GM12878 (cell line): ENCODE measurements at regions of chr3 and their contacts with region 1.

Region 1: DNA sequence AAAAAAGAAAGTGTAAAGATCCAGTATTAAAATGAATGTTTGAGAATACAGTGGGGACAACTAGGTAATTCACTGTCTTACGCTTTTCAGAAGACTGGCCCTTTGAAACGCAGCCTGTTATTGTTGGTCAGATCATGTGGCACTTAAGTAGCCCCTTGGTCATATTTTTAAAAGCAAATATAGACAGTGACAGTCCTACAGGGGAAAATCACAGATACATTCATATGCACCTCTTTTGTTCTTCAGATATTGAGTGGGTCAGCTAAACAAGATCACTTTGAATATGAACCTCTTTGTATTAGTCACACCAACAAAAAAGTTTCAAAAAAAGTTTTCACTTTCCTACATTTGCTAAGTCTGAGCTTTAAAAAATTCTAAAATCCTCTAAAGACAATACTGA is 36.0 kb downstream of the TIGIT start:
- DNase-seq: no peak
- ATAC-seq: peak; percentile 57
- H3K4me3 ChIP-seq: no peak overlapping the region
- H3K27ac ChIP-seq: no peak overlapping the region
- H3K4me1 ChIP-seq: peaks cover 18% of the 10 kb centered on the region; the same call in 1 of the 2 replicates
- H3K27me3 ChIP-seq: no peaks in the 10 kb centered on the region
- CTCF ChIP-seq: no peak
- EP300 ChIP-seq: peak in 1 of 2 experiments; percentile 18; a peak in 1 of 4 replicates
- POLR2A ChIP-seq: no peak
- RAD21 ChIP-seq: no peak

Region 2: DNA sequence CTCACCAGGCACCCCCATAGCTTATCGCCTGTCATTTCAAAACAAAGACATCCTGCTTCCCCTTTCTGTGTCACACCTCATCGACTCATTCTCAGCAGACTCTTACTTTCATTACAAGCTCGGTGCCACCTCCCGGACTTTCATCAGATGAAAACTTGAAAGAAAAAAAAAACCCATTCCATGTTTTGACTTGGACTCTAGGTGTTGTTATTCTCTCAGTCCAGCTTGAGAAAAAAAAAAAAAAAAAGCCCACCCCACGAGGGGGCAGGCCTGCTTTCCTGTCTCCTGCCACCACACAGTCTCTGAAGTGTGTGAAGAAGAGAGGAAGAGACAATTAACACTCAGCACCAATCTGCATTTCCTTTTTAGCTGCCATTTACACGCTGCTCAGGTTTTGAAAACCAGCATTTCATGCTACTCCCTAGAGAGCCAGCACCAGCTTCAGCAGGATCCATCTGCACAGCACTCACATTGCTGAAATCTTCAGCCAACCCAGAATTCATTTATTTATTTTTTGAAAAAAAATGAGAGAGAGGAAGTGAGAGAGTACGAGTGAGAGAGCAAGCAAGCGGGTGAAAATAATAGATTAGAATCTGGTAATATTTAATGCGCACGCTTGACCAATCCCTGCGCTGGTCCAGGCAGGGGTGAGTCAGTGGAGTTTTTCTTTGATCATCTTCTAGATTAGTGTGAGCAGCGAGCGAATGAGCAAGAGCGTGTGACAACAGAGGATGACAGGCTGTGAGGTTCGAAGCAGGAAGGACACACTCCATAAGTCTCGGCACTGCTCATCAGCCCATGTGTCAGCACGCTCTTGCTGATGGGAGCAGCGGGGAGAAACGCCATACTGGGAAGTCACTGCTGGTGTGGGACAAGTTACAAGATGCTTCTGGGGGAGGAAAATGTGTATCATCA is 115.9 kb before region 1 on chr3:
- CTCF ChIA-PET with region 1: no interaction called
- POLR2A ChIA-PET with region 1: interaction called, 14 read pairs
- RAD21 ChIA-PET with region 1: interaction called, 29 read pairs
- SMC1A ChIA-PET with region 1: interaction called, 3 read pairs
- in situ Hi-C with region 1: no loop called
- intact Hi-C with region 1: no loop called
- DNase-seq: peak; percentile 84
- ATAC-seq: peak; percentile 91
- H3K4me3 ChIP-seq: peak overlapping the region; percentile 63
- H3K27ac ChIP-seq: peak overlapping the region; percentile 88
- H3K4me1 ChIP-seq: peaks cover 20% of the 10 kb centered on the region
- H3K27me3 ChIP-seq: no peaks in the 10 kb centered on the region; a peak in 1 of 4 replicates
- CTCF ChIP-seq: no peak
- EP300 ChIP-seq: peak; percentile 86 to 91
- POLR2A ChIP-seq: peak; percentile 74
- RAD21 ChIP-seq: no peak

Region 3: GRCh38 chr3:114252954-114253353 is 76.9 kb before region 1 on chr3:
- CTCF ChIA-PET with region 1: no interaction called
- POLR2A ChIA-PET with region 1: no interaction called
- RAD21 ChIA-PET with region 1: no interaction called
- SMC1A ChIA-PET with region 1: no interaction called
- in situ Hi-C with region 1: no loop called
- intact Hi-C with region 1: no loop called
- DNase-seq: no peak
- ATAC-seq: no peak
- H3K4me3 ChIP-seq: no peak overlapping the region
- H3K27ac ChIP-seq: no peak overlapping the region
- H3K4me1 ChIP-seq: no peaks in the 10 kb centered on the region
- H3K27me3 ChIP-seq: no peaks in the 10 kb centered on the region
- CTCF ChIP-seq: no peak
- EP300 ChIP-seq: no peak
- POLR2A ChIP-seq: no peak
- RAD21 ChIP-seq: no peak

Region 4: DNA sequence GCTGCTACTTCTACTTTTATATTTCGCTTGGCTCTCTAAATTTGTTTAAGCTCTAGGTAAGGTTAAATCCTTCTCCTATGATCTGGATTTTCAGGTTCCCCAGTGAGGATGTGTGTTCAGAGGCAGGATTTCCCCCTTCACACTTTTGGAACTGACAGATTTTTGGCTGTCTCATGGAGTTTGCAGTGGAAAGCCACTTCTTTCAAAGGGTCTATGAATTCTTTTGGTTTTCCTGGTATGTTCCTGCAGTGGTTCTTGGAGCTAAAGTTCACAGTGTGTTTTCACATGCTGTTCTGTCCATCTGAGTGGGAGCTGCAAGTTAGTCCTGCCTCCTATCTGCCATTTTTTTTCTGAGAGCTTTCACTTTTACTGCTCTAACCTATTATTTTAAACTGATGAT is 57.6 kb before region 1 on chr3:
- CTCF ChIA-PET with region 1: no interaction called
- POLR2A ChIA-PET with region 1: no interaction called
- RAD21 ChIA-PET with region 1: no interaction called
- SMC1A ChIA-PET with region 1: no interaction called
- in situ Hi-C with region 1: no loop called
- intact Hi-C with region 1: no loop called
- DNase-seq: no peak
- ATAC-seq: no peak
- H3K4me3 ChIP-seq: no peak overlapping the region
- H3K27ac ChIP-seq: no peak overlapping the region
- H3K4me1 ChIP-seq: no peaks in the 10 kb centered on the region
- H3K27me3 ChIP-seq: no peaks in the 10 kb centered on the region
- CTCF ChIP-seq: no peak
- EP300 ChIP-seq: no peak
- POLR2A ChIP-seq: no peak
- RAD21 ChIP-seq: no peak